ENCODE measurements at regions of chr2 and their contacts with region 1.

Region 1: GRCh38 chr2:162704496-162704895 is 134.1 kb downstream of the KCNH7 start:
- DNase-seq: no peak
- ATAC-seq: no peak
- H3K4me3 ChIP-seq: no peak overlapping the region
- H3K27ac ChIP-seq: no peak overlapping the region
- H3K4me1 ChIP-seq: peaks cover 6 to 22% of the 10 kb centered on the region in 2 donors
- H3K27me3 ChIP-seq: no peaks in the 10 kb centered on the region
- CTCF ChIP-seq: no peak
- POLR2A ChIP-seq: no peak

Region 2: GRCh38 chr2:162607915-162608314 is 96.6 kb before region 1 on chr2:
- in situ Hi-C with region 1: no loop called
- intact Hi-C with region 1: loop called (anchors 10 kb)
- DNase-seq: no peak
- ATAC-seq: peak; percentile 75 to 99
- H3K4me3 ChIP-seq: no peak overlapping the region
- H3K27ac ChIP-seq: no peak overlapping the region
- H3K4me1 ChIP-seq: peaks cover 0 to 8% of the 10 kb centered on the region in 2 donors
- H3K27me3 ChIP-seq: no peaks in the 10 kb centered on the region
- CTCF ChIP-seq: no peak
- POLR2A ChIP-seq: no peak

Region 3: DNA sequence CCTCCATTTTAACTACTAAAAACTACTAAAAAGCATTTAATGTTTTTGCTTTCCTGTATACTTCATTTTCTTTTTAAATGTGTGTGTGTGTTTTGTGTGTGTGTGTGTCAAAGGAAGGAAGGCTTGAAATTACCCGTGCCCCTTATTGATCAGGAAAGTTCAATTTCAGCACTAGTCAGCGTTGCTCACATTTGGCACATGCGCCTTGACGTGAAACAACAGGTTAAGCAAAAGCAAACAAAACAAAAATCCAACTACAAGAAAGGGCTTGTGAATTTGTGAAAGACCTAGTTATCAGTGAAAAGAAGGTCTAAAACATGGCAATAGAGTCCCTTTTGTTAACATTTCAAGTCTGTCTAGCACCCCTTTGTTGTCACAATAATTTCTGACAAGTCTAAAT is 61.6 kb after region 1 on chr2:
- in situ Hi-C with region 1: no loop called
- intact Hi-C with region 1: no loop called
- DNase-seq: no peak
- ATAC-seq: no peak
- H3K4me3 ChIP-seq: no peak overlapping the region
- H3K27ac ChIP-seq: no peak overlapping the region
- H3K4me1 ChIP-seq: no peaks in the 10 kb centered on the region
- H3K27me3 ChIP-seq: no peaks in the 10 kb centered on the region
- CTCF ChIP-seq: no peak
- POLR2A ChIP-seq: no peak

Measured in gastrocnemius medialis (tissue), 4 donors.